ENCODE measurements at regions of chr1 and their contacts with region 1.

Region 1: DNA sequence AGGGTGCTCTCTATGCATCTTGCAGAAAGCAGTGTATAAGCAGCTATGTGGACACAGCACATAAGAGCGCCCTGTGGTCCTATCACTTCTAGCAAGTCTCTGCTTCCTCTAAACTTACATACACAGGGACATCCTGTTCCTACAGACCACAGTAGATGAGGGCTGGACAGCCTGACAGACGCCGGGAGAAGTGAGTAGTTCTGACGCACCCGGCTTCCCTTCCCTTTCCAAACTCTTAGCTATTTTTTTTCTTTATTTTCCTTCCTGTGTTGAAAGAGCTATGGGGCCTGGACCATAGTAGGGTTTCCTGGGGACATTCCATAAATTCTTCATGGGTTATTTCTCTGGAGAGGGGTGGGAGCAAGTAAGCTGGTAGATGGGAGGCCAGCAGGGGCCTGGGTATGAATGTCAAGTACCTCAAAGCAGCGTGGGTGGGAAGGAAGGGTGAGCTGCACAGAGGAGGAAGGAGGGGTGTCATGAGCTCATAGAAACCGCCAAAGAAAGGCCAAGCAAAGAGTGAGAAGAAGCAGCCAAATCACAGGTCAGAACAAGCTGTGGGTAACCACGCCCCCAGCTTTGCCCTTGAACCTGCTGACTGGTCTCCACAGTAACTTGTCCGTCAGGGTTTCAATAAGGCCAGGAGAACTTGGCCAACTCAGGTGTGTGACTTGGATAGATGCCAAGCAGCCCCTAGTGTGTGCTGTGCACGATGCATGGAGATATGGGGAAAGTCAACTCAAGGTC is 36.6 kb downstream of the PLXNA2 start:
- DNase-seq: peak in 1 of 2 experiments; percentile 53
- H3K4me3 ChIP-seq: no peak overlapping the region
- H3K27ac ChIP-seq: peak overlapping the region; percentile 20; the same call in 1 of the 2 replicates
- H3K4me1 ChIP-seq: peaks cover 44% of the 10 kb centered on the region
- H3K27me3 ChIP-seq: no peaks in the 10 kb centered on the region
- CTCF ChIP-seq: no peak

Region 2: GRCh38 chr1:208047476-208047934 is 160.1 kb before region 1 on chr1:
- CTCF ChIA-PET with region 1: no interaction called
- POLR2A ChIA-PET with region 1: interaction called, 13 read pairs
- intact Hi-C with region 1: no loop called
- DNase-seq: no peak
- H3K4me3 ChIP-seq: no peak overlapping the region
- H3K27ac ChIP-seq: no peak overlapping the region
- H3K4me1 ChIP-seq: peaks cover 37% of the 10 kb centered on the region
- H3K27me3 ChIP-seq: no peaks in the 10 kb centered on the region
- CTCF ChIP-seq: no peak

Region 3: DNA sequence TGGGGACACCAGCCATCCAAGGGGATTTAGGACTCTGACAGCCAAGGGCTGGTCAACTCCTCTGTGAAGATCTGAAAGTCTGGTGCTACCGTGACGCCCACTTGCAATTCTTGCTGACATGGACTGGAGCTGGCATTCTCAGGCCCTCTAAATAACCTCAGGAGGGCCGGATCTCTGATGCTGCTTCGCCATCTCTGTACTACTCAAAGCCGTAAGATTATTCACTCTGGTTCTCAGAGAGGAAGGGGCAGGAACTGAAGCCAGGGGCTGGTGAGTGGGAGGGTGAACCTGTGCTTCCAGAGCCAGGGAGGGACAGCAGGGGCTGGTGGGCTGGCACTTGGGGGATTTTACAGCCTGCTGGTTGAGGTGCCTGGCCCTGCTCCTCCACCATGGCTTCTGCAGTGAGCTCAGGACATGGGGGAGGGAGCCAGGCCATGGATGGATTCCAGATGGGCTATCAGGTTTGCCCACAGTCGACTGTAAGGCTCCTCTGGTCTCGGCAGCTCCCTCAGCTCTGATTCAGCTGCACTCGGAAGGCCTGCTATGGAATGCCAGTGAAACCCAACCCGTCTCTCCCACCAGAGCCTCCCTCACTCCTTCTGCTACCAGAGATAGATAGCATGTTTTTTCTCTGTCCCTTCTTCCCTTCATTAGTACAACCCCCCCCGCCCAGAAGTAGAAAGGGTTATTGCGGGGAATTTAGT is 47.9 kb before region 1 on chr1:
- CTCF ChIA-PET with region 1: no interaction called
- POLR2A ChIA-PET with region 1: no interaction called
- intact Hi-C with region 1: no loop called
- DNase-seq: no peak
- H3K4me3 ChIP-seq: no peak overlapping the region
- H3K27ac ChIP-seq: no peak overlapping the region
- H3K4me1 ChIP-seq: peaks cover 16% of the 10 kb centered on the region
- H3K27me3 ChIP-seq: no peaks in the 10 kb centered on the region
- CTCF ChIP-seq: no peak

Region 4: GRCh38 chr1:208231929-208232661 is 24.5 kb after region 1 on chr1:
- CTCF ChIA-PET with region 1: no interaction called
- POLR2A ChIA-PET with region 1: interaction called, 5 read pairs
- intact Hi-C with region 1: loop called (anchors 1 kb)
- DNase-seq: peak; percentile 88 to 89
- H3K4me3 ChIP-seq: no peak overlapping the region
- H3K27ac ChIP-seq: peak overlapping the region; percentile 27
- H3K4me1 ChIP-seq: peaks cover 64% of the 10 kb centered on the region
- H3K27me3 ChIP-seq: no peaks in the 10 kb centered on the region
- CTCF ChIP-seq: no peak

Region 5: GRCh38 chr1:208369045-208369444 is 161.5 kb after region 1 on chr1:
- CTCF ChIA-PET with region 1: no interaction called
- POLR2A ChIA-PET with region 1: no interaction called
- intact Hi-C with region 1: no loop called
- DNase-seq: no peak
- H3K4me3 ChIP-seq: no peak overlapping the region
- H3K27ac ChIP-seq: no peak overlapping the region
- H3K4me1 ChIP-seq: no peaks in the 10 kb centered on the region
- H3K27me3 ChIP-seq: peaks cover 28% of the 10 kb centered on the region
- CTCF ChIP-seq: no peak

Measured in PC-9 (cell line).